Adrenal gland (tissue), 19 donors: ENCODE measurements at regions of chr2 and their contacts with region 1.

Region 1: GRCh38 chr2:231925303-231926179 is 655 bp downstream of the NPPC start:
- DNase-seq: peak; percentile 80 to 92 (median 87)
- H3K4me3 ChIP-seq: peak overlapping the region in 2 of 4 donors; percentile 10 to 35
- H3K27ac ChIP-seq: no peak overlapping the region
- H3K4me1 ChIP-seq: peaks cover 13 to 21% of the 10 kb centered on the region in 2 donors
- H3K27me3 ChIP-seq: peaks cover 44% of the 10 kb centered on the region
- CTCF ChIP-seq: peak; percentile 47 to 96 (median 82)
- POLR2A ChIP-seq: no peak

Region 2: DNA sequence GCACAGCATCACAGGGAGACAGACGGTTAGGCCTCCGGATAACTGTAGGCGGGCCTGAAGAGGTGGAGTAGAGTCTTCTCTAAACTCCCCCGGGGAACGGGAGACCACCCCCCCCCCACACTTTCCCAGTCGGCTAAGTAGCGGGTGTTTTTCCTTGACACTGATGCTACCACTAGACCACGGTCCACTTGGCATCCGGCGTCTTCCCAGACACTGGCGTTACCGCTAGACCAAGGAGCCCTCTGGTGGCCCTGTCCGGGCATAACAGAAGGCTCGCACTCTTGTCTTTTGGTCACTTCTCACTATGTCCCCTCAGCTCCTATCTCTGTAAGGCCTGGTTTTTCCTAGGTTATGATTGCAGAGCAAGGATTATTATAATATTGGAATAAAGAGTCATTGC is 435.6 kb before region 1 on chr2:
- intact Hi-C with region 1: no loop called
- DNase-seq: peak in 4 of 7 donors; percentile 31 to 65 (median 49)
- H3K4me3 ChIP-seq: no peak overlapping the region
- H3K27ac ChIP-seq: no peak overlapping the region
- H3K4me1 ChIP-seq: no peaks in the 10 kb centered on the region
- H3K27me3 ChIP-seq: no peaks in the 10 kb centered on the region
- CTCF ChIP-seq: peak in 4 of 6 experiments; percentile 10 to 43 (median 22)
- POLR2A ChIP-seq: no peak

Region 3: DNA sequence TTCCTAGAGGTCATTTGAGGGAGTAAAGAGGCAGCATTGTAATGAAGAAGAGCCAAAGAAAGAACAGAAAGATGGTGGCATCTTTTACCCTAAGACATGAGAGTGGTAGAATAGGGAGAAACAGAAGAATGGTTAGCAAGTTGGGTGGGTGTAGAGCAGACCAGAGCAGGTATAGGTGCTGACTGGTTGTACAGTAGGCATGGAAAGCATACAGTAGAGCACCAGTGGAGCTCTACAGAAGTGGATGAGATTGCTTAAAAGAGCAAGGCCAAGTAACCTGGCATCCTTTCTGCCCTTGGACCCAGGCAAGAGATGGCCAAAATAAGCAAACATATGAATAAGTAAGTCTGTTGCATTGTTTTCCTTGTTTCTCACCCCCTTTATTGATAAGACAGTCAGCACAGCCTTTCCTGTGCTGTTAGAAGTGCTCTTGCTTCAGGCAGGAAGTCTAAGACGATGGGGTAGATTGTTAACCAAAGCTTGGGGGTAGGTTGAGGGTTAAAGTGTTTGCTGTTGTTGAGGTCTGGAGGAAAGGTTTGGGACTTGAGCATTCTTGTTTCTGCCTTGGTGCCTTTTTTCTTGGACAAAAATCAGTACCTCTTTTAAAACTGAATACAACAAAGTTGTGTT is 112.8 kb after region 1 on chr2:
- intact Hi-C with region 1: no loop called
- DNase-seq: no peak
- H3K4me3 ChIP-seq: no peak overlapping the region
- H3K27ac ChIP-seq: no peak overlapping the region
- H3K4me1 ChIP-seq: no peaks in the 10 kb centered on the region
- H3K27me3 ChIP-seq: no peaks in the 10 kb centered on the region
- CTCF ChIP-seq: no peak
- POLR2A ChIP-seq: no peak

Region 4: GRCh38 chr2:232142049-232142448 is 216.5 kb after region 1 on chr2:
- intact Hi-C with region 1: loop called (anchors 5 kb)
- DNase-seq: peak; percentile 18 to 62 (median 46)
- H3K4me3 ChIP-seq: no peak overlapping the region
- H3K27ac ChIP-seq: no peak overlapping the region
- H3K4me1 ChIP-seq: no peaks in the 10 kb centered on the region
- H3K27me3 ChIP-seq: no peaks in the 10 kb centered on the region
- CTCF ChIP-seq: peak; percentile 49 to 83 (median 72)
- POLR2A ChIP-seq: no peak

Region 5: GRCh38 chr2:232321156-232321816 is 395.7 kb after region 1 on chr2:
- intact Hi-C with region 1: loop called (anchors 5 kb)
- DNase-seq: peak in 2 of 7 donors; percentile 5 to 11
- H3K4me3 ChIP-seq: no peak overlapping the region
- H3K27ac ChIP-seq: no peak overlapping the region
- H3K4me1 ChIP-seq: peaks cover 0 to 11% of the 10 kb centered on the region in 2 donors
- H3K27me3 ChIP-seq: no peaks in the 10 kb centered on the region
- CTCF ChIP-seq: no peak
- POLR2A ChIP-seq: no peak